Thyroid gland (tissue), 4 donors: ENCODE measurements at regions of chr2 and their contacts with region 1.

Region 1: DNA sequence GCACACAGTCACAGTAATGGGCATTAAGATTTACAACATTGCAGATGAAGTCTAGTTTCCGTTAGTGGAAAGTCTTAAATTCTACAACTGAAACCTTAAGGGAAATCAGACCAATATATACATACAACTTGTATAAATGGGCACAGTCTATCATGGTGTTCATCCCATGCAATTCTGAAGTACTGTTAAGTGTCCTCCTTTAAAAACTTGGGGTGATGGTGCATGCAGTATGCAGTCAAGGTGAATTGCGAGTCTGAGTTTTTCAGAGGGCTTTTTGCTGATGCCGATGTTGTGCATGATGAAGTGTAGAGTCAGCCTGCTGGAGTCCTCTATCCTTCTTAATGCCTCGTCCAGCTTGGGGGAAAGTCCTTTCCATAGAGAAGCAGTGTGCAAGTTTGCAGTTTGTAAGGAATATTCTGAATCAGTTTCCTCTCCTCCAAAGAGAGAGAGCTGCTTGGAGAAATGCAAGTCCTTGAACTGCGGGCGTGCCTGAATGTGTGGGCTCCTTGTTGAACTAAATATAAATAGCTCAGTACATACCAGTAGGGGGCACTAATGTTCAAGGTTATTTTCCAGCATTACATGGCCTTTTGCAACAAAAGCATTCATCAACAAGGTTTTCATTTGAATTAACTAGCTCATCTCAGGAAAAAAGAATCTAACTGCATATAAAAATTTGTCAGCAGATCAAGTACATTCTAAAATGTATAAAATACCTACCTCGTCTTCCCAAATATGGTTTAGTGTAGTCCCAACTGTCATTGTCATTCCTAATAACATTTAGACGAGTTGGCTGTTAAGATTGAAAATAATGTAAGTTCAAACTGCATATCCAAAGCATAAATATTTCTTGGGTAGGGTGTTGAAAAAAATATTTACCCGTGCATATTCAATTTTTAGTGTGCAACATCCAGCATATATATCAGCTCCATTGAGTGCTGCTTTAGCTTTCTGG is 21.3 kb downstream of the HNRNPLL start:
- DNase-seq: peak; percentile 44 to 55
- H3K4me3 ChIP-seq: no peak overlapping the region
- H3K27ac ChIP-seq: no peak overlapping the region
- H3K4me1 ChIP-seq: peaks cover 3 to 9% of the 10 kb centered on the region in 2 donors
- H3K27me3 ChIP-seq: no peaks in the 10 kb centered on the region
- CTCF ChIP-seq: peak in 5 of 6 experiments; percentile 25 to 80 (median 65)
- POLR2A ChIP-seq: no peak

Region 2: GRCh38 chr2:37005118-37005868 is 1576.2 kb before region 1 on chr2:
- intact Hi-C with region 1: no loop called
- DNase-seq: no peak
- H3K4me3 ChIP-seq: no peak overlapping the region
- H3K27ac ChIP-seq: no peak overlapping the region
- H3K4me1 ChIP-seq: no peaks in the 10 kb centered on the region
- H3K27me3 ChIP-seq: no peaks in the 10 kb centered on the region
- CTCF ChIP-seq: peak in 2 of 6 experiments; percentile 13 to 24
- POLR2A ChIP-seq: no peak

Region 3: DNA sequence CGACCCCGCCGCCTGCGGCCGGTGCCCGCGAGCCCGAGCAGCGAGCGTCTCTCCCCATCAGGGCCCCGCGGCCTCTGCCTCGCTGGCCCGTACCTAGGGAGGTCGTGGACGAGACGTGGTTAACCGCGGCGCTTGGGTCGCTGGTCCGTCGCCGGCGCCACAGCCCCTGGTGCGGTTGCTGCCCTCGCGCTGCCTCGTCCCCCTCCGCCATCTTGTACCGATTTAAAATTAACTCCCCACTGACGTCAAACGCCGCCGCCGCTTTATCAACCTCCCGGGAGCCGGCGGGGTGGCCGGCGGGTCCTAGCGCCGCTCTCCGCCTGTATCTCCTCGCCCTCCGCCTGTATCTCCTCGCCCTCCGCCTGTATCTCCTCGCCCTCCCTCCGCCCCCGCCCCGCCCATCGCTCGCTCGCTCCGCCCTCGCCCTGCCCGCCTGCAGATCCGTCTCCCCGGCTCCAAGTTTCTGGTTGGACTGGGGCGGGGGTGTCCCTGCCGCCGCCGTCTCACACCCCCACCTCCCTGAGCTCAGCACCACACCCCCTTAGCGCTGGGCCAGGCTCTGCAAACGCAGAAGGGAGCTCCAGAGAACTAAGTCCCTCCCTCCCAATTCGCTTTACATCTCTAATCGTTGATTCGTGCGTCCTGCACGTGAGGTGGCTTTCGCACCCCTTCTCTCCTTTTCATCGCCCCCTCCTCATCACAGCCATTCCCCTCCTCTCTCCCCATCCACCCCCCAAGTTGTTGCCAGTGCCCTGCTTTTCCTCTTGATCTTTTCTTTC is 204.2 kb before region 1 on chr2 and contains the start of gene ATL2:
- intact Hi-C with region 1: no loop called
- DNase-seq: peak; percentile 96 to 97
- H3K4me3 ChIP-seq: peak within 1 kb of the TSS; percentile 74 to 91 (median 84)
- H3K27ac ChIP-seq: peak within 1 kb of the TSS; percentile 97 to 99 (median 98)
- H3K4me1 ChIP-seq: peaks cover 14 to 31% of the 10 kb centered on the region in 2 donors
- H3K27me3 ChIP-seq: no peaks in the 10 kb centered on the region
- CTCF ChIP-seq: no peak
- POLR2A ChIP-seq: peak; percentile 84 to 96
- total RNA-seq, gene ATL2: 126 to 267 (median 146) TPM

Region 4: DNA sequence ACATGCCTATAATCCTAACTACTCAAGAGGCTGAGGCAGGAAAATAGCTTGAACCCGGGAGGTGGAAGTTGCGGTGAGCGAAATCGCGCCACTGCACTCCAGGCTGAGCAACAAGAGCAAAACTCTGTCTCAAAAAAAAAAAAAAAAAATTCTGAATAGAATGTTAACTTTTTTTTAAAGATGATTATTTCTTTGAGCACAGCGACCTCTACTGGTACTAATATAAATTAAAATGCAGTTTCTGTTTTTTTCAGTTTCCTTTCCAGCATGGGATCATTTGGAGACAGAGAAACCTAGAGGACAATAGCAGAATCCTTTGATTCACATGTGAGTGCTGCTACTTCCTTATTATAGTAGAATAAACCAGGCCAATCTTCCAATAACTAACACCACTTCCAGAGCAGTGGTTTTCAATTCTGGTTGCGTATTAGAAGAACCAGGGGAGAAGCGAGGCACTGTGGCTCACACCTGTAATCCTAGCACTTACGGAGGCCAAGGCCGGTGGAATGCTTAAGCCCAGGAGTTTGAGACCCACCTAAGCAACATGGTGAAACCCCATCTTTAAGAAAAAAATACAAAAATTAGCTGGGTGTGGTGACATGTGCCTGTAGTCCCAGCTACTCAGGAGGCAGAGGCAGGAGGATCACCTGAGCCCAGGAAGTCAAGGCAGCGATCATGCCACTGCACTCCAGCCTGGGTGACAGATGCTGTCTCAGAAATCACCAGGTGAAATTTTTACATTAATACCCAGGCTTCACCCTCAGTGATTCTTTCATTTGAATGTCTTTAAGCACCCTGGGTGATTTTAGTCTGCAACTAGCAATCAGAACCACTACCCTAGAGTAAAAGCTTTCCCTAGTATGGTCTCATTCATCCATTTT is 159.6 kb after region 1 on chr2:
- intact Hi-C with region 1: loop called (anchors 5 kb)
- DNase-seq: peak; percentile 21 to 47
- H3K4me3 ChIP-seq: no peak overlapping the region
- H3K27ac ChIP-seq: no peak overlapping the region
- H3K4me1 ChIP-seq: peaks cover 0 to 10% of the 10 kb centered on the region in 2 donors
- H3K27me3 ChIP-seq: no peaks in the 10 kb centered on the region
- CTCF ChIP-seq: peak in 5 of 6 experiments; percentile 38 to 75 (median 65)
- POLR2A ChIP-seq: no peak

Region 5: GRCh38 chr2:38959938-38960608 is 378.6 kb after region 1 on chr2:
- intact Hi-C with region 1: no loop called
- DNase-seq: peak; percentile 78 to 79
- H3K4me3 ChIP-seq: peak overlapping the region in 1 of 3 donors; percentile 40
- H3K27ac ChIP-seq: no peak overlapping the region
- H3K4me1 ChIP-seq: peaks cover 6 to 11% of the 10 kb centered on the region in 2 donors
- H3K27me3 ChIP-seq: no peaks in the 10 kb centered on the region
- CTCF ChIP-seq: peak in 2 of 6 experiments; percentile 14 to 25
- POLR2A ChIP-seq: peak in 1 of 2 donors; percentile 18